Naive thymus-derived CD4-positive, alpha-beta T cell (primary cell): ENCODE measurements at regions of chr1 and their contacts with region 1.

Region 1: DNA sequence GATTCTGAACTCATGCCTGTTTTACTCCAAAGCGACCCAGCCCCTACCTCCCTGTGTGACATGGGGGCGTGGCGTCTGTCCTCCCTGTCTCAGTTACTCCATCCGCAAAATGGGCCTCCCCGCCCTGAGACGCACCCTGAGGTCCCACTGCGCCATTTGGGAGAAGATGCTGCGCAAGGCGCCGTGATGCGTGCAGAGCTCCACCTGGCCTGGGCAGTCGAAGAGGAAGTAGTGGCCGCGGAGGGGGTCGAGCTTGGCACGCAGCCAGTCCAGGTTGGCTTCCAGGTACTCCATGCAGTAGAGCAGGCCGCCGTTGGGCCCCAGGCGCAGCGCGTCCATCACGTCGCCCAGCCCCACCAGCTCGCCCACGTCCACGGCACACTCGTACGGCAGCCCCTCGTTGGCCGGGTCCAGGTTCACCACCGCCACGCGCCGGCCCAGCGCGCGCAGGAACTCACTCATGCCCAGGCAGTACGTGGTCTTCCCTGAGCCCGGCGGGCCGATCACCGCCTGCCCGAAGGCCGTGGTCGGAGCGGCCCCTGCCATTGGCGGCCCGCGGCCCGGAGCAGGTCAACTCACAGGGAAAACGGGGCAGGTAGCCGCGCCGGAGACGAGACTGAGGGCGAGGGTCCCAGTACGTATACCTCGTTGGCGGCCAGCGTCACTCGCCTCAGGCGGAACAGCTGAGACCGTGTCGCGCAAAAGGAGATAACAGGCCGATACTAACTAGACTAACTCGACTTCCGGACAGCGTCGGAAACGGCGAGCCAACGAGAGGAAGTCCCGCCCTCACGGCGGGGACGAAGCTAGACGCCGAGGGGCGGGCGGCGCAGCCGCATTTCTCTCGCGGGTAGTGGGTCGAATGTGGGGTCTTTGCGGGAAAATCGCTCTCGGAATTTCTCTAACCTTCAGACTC is at the start of gene GPN2:
- DNase-seq: peak; percentile 49 to 78 (median 73)
- ATAC-seq: peak; percentile 97
- H3K4me3 ChIP-seq: peak within 1 kb of the TSS; percentile 98
- H3K4me3 Mint-ChIP-seq: peak within 1 kb of the TSS; percentile 89 to 98 (median 94)
- H3K27ac ChIP-seq: peak within 1 kb of the TSS; percentile 94
- H3K27ac Mint-ChIP-seq: peak within 1 kb of the TSS; percentile 93 to 96 (median 95)
- H3K4me1 ChIP-seq: peaks cover 7% of the 10 kb centered on the region in 2 donors
- H3K4me1 Mint-ChIP-seq: peaks cover 22 to 43% (median 35%) of the 10 kb centered on the region in 7 donors
- H3K27me3 ChIP-seq: no peaks in the 10 kb centered on the region
- H3K27me3 Mint-ChIP-seq: no peaks in the 10 kb centered on the region
- total RNA-seq, gene GPN2: 22.1 to 50.6 (median 34.8) TPM

Region 2: DNA sequence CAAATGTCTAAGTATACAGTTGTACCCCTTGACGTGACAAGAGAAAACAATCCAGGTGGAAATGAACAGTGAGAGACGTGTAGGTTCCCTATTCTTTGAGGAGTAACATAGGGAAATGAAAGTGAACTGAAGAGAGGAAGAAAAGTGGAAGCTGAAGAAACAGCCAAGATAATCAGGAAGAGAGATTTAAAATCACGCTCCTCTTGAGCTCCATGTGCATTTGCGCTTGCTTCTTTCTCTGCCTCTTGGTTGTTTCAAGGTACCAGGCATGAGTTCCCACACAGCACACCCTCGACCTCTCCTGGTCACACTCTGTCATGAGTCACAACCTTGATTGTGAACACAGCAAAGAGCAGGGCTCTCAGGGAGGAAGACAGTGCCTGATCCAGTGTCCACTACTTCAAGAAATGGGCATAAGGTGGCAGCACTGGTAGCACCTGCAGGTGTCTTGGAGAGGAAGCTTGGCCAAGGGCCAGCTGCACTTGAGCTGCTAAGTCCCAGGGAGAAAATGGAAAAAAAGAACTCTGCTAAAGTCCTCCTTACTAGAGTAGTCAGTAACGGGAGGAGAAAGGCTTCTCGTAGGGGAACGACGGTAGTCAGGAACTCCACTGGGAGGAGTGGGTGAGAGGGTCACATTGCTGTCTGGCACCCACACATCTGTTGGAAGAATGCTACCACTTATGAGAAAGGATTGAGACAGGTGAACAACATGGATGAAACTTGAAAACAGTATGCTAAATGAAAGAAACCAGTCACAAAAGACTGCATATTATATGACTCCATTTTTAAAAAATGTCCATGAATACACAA is 212.3 kb before region 1 on chr1:
- CTCF ChIA-PET with region 1: no interaction called
- POLR2A ChIA-PET with region 1: no interaction called
- intact Hi-C with region 1: no loop called
- DNase-seq: peak; percentile 23 to 62 (median 50)
- ATAC-seq: peak; percentile 96
- H3K4me3 ChIP-seq: no peak overlapping the region
- H3K4me3 Mint-ChIP-seq: peak overlapping the region; percentile 36 to 83 (median 67)
- H3K27ac ChIP-seq: no peak overlapping the region
- H3K27ac Mint-ChIP-seq: peak overlapping the region; percentile 6 to 89 (median 78)
- H3K4me1 ChIP-seq: peaks cover 0 to 13% of the 10 kb centered on the region in 2 donors
- H3K4me1 Mint-ChIP-seq: peaks cover 11 to 24% (median 17%) of the 10 kb centered on the region in 7 donors
- H3K27me3 ChIP-seq: no peaks in the 10 kb centered on the region
- H3K27me3 Mint-ChIP-seq: no peaks in the 10 kb centered on the region

Region 3: GRCh38 chr1:26826261-26827105 is 63.3 kb before region 1 on chr1 and contains the start of gene ZDHHC18:
- CTCF ChIA-PET with region 1: no interaction called
- POLR2A ChIA-PET with region 1: interaction called, 5 read pairs
- intact Hi-C with region 1: loop called in 1 of 2 experiments (anchors 2 kb)
- DNase-seq: peak; percentile 56 to 91 (median 77)
- ATAC-seq: peak; percentile 96
- H3K4me3 ChIP-seq: peak within 1 kb of the TSS; percentile 86
- H3K4me3 Mint-ChIP-seq: peak within 1 kb of the TSS; percentile 89 to 99 (median 93)
- H3K27ac ChIP-seq: peak within 1 kb of the TSS; percentile 98
- H3K27ac Mint-ChIP-seq: peak within 1 kb of the TSS; percentile 93 to 100 (median 98)
- H3K4me1 ChIP-seq: peaks cover 39 to 42% of the 10 kb centered on the region in 2 donors
- H3K4me1 Mint-ChIP-seq: peaks cover 37 to 70% (median 64%) of the 10 kb centered on the region in 7 donors
- H3K27me3 ChIP-seq: no peaks in the 10 kb centered on the region
- H3K27me3 Mint-ChIP-seq: no peaks in the 10 kb centered on the region
- total RNA-seq, gene ZDHHC18: 36.4 to 72.4 (median 39.7) TPM

Region 4: DNA sequence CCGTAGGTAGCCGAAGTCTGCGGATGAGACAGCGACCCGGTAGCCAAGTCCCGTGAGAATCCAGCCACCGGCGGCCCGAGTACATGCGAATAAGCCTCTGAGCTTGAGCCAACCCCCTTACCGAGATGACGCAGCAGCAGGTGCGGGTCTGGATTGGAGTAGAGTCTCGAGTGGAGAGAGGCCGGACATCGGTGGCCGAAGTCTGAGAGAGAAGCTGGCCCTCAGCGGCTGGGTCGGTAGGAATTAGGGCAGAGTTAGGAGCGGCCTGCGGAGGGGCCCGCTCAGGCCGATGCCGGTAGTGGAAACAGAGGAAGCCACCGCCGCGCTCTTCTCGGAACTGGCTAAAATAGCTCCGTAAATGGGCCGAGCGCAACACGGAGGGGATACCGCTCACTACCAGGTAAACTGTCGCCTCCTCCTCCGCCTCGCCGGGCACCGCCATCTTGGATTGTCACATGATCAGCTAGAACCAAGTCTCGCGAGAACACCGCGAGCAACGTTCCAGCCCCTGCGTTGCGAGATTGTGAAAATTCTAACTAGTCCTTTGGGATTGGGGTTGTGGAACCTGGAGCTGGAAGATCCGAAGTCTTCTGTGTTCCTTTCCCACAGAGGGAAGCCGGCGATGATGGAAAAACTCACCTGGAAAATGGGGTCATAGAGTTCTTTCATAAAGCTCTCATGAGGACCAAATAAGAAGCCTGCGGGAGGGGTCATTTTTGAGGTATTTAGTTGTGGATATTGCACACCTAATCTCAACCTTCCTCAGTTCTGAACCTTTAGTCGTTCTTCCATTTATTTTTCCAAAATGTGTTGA is 10.4 kb after region 1 on chr1 and contains the start of gene GPATCH3:
- CTCF ChIA-PET with region 1: interaction called, 4 read pairs
- POLR2A ChIA-PET with region 1: interaction called, 74 read pairs
- intact Hi-C with region 1: loop called (anchors 1 kb)
- DNase-seq: peak; percentile 68 to 89 (median 86)
- ATAC-seq: peak; percentile 93
- H3K4me3 ChIP-seq: peak within 1 kb of the TSS; percentile 94
- H3K4me3 Mint-ChIP-seq: peak within 1 kb of the TSS; percentile 87 to 99 (median 96)
- H3K27ac ChIP-seq: peak within 1 kb of the TSS; percentile 90
- H3K27ac Mint-ChIP-seq: peak within 1 kb of the TSS; percentile 94 to 100 (median 99)
- H3K4me1 ChIP-seq: peaks cover 10 to 16% of the 10 kb centered on the region in 2 donors
- H3K4me1 Mint-ChIP-seq: peaks cover 24 to 46% (median 39%) of the 10 kb centered on the region in 7 donors
- H3K27me3 ChIP-seq: no peaks in the 10 kb centered on the region
- H3K27me3 Mint-ChIP-seq: no peaks in the 10 kb centered on the region
- total RNA-seq, gene GPATCH3: 17.0 to 38.4 (median 22.6) TPM

Region 5: GRCh38 chr1:26913754-26914619 is 24.2 kb after region 1 on chr1 and contains the start of gene NR0B2:
- CTCF ChIA-PET with region 1: no interaction called
- POLR2A ChIA-PET with region 1: no interaction called
- intact Hi-C with region 1: no loop called
- DNase-seq: no peak
- ATAC-seq: no peak
- H3K4me3 ChIP-seq: no peak within 1 kb of the TSS
- H3K4me3 Mint-ChIP-seq: no peak within 1 kb of the TSS
- H3K27ac ChIP-seq: no peak within 1 kb of the TSS
- H3K27ac Mint-ChIP-seq: no peak within 1 kb of the TSS
- H3K4me1 ChIP-seq: no peaks in the 10 kb centered on the region
- H3K4me1 Mint-ChIP-seq: no peaks in the 10 kb centered on the region
- H3K27me3 ChIP-seq: no peaks in the 10 kb centered on the region
- H3K27me3 Mint-ChIP-seq: peaks cover 0 to 6% (median 0%) of the 10 kb centered on the region in 5 donors
- total RNA-seq, gene NR0B2: not detected

Region 6: DNA sequence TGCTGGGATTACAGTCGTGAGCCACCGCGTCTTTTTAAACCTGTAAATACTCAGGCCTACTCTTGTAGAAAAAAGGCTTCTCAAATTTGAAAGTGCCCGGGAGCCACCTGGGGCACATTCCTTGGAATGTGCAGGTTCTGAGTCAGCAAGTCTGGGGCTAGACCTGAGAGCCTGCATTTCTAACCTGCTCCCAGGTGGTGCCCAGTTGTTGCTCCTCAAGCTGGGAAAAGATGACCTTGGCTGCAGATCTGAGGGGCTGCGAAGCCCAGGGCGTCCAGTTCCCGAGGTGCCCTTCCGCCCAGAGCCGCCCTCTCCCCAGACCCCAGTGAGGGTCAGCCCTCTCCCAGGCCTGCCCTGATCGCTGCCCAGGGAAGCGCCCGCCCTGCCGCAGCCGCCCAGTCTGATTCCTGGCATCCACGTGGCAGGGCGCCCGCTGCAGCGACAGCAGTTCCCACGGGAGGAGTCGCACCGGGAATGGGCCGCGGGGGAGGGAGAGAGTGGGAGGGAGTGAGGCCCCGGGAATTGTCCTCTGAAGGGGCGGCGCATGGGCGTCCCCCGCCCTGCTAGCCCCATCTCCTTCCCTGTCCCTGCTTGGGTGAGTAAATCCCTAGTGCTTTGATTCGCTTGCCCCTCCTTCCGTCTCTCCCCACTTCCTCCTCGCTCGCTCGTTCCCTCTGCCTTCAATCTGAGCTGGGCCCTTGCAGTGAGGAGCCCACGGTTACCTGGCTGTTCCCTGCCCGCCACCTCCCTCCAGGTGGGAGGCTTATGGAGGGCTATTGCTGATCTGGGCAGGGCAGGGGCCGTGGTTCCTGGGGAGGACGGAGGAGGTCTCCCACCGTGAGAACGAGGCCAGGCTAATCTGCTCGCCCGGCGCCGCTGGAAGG is 141.7 kb after region 1 on chr1:
- CTCF ChIA-PET with region 1: no interaction called
- POLR2A ChIA-PET with region 1: no interaction called
- intact Hi-C with region 1: no loop called
- DNase-seq: no peak
- ATAC-seq: no peak
- H3K4me3 ChIP-seq: no peak overlapping the region
- H3K4me3 Mint-ChIP-seq: peak overlapping the region in 3 of 10 donors; percentile 27 to 31 (median 29)
- H3K27ac ChIP-seq: no peak overlapping the region
- H3K27ac Mint-ChIP-seq: no peak overlapping the region
- H3K4me1 ChIP-seq: no peaks in the 10 kb centered on the region
- H3K4me1 Mint-ChIP-seq: peaks cover 0 to 4% (median 0%) of the 10 kb centered on the region in 7 donors
- H3K27me3 ChIP-seq: no peaks in the 10 kb centered on the region
- H3K27me3 Mint-ChIP-seq: peaks cover 0 to 10% (median 5%) of the 10 kb centered on the region in 5 donors